CD14-positive monocyte (primary cell): ENCODE measurements at regions of chr11 and their contacts with region 1.

Region 1: DNA sequence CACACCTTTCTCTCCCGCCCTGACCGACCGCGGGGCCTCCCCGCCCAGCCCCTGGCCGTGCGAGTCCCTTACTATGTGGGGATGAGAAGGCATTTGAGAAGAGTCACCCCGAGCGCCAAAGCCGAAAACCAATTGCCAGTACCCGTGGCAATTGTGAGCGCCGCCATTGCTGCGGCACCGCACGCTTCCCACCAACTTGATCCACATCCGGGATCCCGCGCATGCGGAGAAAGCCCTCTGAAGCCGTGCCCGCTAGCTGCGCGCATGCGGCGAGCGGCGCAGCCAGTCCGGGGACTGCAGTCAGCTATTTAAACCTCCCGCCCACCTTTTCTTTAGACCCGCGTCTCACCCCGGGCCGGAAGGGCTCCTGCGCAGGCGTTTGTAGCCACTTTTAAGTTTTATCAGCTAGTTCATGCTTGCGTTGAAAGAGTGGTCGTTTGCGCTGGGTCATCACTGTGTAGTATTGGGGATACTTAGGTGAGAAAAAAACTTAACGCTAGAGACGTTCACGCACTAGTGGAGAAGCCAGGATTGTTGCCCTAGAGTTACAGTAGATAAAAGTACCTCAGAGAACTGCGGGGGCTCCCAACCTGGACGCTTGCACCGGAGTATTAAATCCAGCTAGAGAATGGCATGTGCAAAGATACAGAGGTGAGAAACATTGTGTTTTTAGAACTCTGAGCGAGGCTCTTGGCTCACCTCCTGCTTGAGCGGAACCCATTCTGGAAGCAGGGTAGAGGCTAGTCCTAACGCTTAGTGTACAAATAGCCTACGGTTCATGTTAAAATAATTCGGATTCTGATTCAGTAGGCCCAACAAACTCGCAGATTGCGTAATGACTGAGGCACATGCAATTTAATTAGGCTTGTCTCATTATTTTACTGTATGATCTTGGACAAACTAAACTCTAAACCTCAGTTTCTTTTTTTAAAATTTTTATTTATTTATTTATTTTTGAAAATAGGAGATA is at the start of gene ALG8:
- DNase-seq: peak; percentile 90 to 97 (median 90)
- H3K4me3 ChIP-seq: peak within 1 kb of the TSS; percentile 76 to 91 (median 84)
- H3K4me3 Mint-ChIP-seq: peak within 1 kb of the TSS; percentile 85 to 93
- H3K27ac ChIP-seq: peak within 1 kb of the TSS; percentile 73 to 86
- H3K27ac Mint-ChIP-seq: peak within 1 kb of the TSS; percentile 85 to 92 (median 89)
- H3K4me1 ChIP-seq: peaks cover 29 to 31% of the 10 kb centered on the region in 2 donors
- H3K4me1 Mint-ChIP-seq: peaks cover 35% of the 10 kb centered on the region
- H3K27me3 ChIP-seq: no peaks in the 10 kb centered on the region
- H3K27me3 Mint-ChIP-seq: peaks cover 2 to 8% (median 3%) of the 10 kb centered on the region in 3 donors
- CTCF ChIP-seq: no peak
- polyA plus RNA-seq, gene ALG8: 15.6 to 41.7 (median 40.6) TPM

Region 2: DNA sequence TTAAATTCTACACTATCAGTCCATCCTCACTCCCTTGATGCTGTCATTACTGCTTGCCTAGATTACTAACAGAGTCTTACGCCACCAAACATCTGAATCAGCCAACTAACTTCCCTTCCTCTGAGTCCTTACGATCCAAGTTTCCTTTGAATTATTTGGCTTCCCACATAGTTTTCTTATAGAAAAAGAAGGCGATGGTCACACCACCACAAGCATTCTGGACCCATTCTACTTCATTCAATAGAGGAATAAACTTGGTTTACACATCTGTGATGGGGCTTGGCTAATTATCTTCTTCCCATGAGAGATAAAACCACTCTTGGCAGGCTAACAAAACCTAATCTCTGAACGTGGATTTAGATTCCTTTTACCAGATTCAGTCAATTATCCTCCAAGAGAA is 180.3 kb before region 1 on chr11:
- intact Hi-C with region 1: no loop called
- DNase-seq: no peak
- H3K4me3 ChIP-seq: no peak overlapping the region
- H3K4me3 Mint-ChIP-seq: no peak overlapping the region
- H3K27ac ChIP-seq: no peak overlapping the region
- H3K27ac Mint-ChIP-seq: no peak overlapping the region
- H3K4me1 ChIP-seq: no peaks in the 10 kb centered on the region
- H3K4me1 Mint-ChIP-seq: no peaks in the 10 kb centered on the region
- H3K27me3 ChIP-seq: no peaks in the 10 kb centered on the region
- H3K27me3 Mint-ChIP-seq: no peaks in the 10 kb centered on the region
- CTCF ChIP-seq: no peak

Region 3: DNA sequence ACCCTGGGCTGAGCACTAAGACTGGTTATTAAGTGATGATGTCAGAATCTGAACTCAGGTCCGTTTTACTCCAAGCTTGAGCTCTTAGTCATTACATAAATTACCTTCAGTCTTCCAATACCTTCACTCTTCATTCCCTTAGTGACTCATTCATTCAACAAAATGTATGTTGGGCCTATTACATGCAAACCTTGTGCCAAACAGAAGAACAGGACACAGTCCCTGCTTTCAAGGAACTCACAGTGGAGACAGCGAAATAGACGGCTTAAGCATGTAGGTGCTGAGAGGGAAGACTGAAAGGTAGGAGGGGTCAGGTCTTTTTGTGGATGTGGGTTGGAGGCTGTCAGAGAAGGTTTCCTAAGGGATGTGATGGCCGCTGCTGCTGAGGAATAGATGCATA is 119.9 kb before region 1 on chr11:
- intact Hi-C with region 1: no loop called
- DNase-seq: no peak
- H3K4me3 ChIP-seq: no peak overlapping the region
- H3K4me3 Mint-ChIP-seq: no peak overlapping the region
- H3K27ac ChIP-seq: no peak overlapping the region
- H3K27ac Mint-ChIP-seq: no peak overlapping the region
- H3K4me1 ChIP-seq: peaks cover 4 to 6% of the 10 kb centered on the region in 2 donors
- H3K4me1 Mint-ChIP-seq: peaks cover 9% of the 10 kb centered on the region
- H3K27me3 ChIP-seq: peaks cover 2 to 15% of the 10 kb centered on the region in 2 donors
- H3K27me3 Mint-ChIP-seq: peaks cover 14 to 28% (median 23%) of the 10 kb centered on the region in 3 donors
- CTCF ChIP-seq: no peak

Region 4: GRCh38 chr11:78188286-78189173 is 48.8 kb after region 1 on chr11 and contains the starts of genes KCTD21 and USP35:
- intact Hi-C with region 1: loop called (anchors 5 kb)
- DNase-seq: peak; percentile 92 to 96 (median 96)
- H3K4me3 ChIP-seq: peak within 1 kb of the TSS; percentile 77 to 96 (median 94)
- H3K4me3 Mint-ChIP-seq: peak within 1 kb of the TSS; percentile 96 to 97
- H3K27ac ChIP-seq: peak within 1 kb of the TSS; percentile 49 to 85
- H3K27ac Mint-ChIP-seq: peak within 1 kb of the TSS; percentile 92 to 98 (median 96)
- H3K4me1 ChIP-seq: peaks cover 41 to 50% of the 10 kb centered on the region in 2 donors
- H3K4me1 Mint-ChIP-seq: peaks cover 56% of the 10 kb centered on the region
- H3K27me3 ChIP-seq: no peaks in the 10 kb centered on the region
- H3K27me3 Mint-ChIP-seq: peaks cover 0 to 3% (median 0%) of the 10 kb centered on the region in 3 donors
- CTCF ChIP-seq: no peak
- polyA plus RNA-seq, gene KCTD21: 3.2 to 9.2 (median 5.2) TPM
- polyA plus RNA-seq, gene USP35: 0.42 to 7.6 (median 0.63) TPM